Activated naive CD4-positive, alpha-beta T cell treated with anti-CD3 and anti-CD28 coated beads for 36 hours (primary cell): ENCODE measurements at regions of chr1 and their contacts with region 1.

Region 1: GRCh38 chr1:185813401-185813979 is 79.3 kb downstream of the HMCN1 start:
- DNase-seq: peak; percentile 19
- H3K4me3 Mint-ChIP-seq: no peak overlapping the region
- H3K27ac Mint-ChIP-seq: no peak overlapping the region
- H3K4me1 Mint-ChIP-seq: no peaks in the 10 kb centered on the region
- H3K27me3 Mint-ChIP-seq: no peaks in the 10 kb centered on the region

Region 2: DNA sequence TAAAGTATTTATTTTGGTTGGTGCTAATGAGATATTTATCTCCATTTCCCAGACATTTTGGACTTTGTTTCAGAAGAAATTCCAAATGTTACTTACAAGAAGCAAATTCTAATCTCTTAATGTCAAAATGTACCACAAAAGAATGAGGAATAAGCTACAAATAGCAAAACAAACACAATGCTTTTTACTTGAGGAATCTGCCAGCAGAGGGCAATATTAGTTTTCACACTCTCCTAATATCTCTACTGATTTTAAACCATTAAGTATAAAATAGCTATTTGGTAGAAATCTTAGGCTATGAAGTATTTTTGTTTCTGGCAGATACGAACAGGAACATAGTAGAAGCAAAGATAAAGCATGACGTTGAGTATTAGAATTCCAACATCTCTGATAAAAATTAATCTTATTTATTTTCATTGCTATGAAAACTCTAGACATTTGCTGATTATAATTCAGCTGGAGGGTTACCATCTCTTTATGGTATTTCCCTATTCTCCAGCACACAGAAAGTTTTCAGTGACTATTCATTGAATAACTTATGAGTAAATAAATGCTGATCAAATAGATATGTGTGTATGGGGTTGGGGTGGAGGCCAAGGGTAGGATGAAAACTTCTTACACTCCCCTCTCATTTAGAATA is 92.7 kb before region 1 on chr1:
- CTCF ChIA-PET with region 1: no interaction called
- intact Hi-C with region 1: loop called (anchors 5 kb)
- DNase-seq: no peak
- H3K4me3 Mint-ChIP-seq: no peak overlapping the region
- H3K27ac Mint-ChIP-seq: no peak overlapping the region
- H3K4me1 Mint-ChIP-seq: no peaks in the 10 kb centered on the region
- H3K27me3 Mint-ChIP-seq: peaks cover 8% of the 10 kb centered on the region

Region 3: DNA sequence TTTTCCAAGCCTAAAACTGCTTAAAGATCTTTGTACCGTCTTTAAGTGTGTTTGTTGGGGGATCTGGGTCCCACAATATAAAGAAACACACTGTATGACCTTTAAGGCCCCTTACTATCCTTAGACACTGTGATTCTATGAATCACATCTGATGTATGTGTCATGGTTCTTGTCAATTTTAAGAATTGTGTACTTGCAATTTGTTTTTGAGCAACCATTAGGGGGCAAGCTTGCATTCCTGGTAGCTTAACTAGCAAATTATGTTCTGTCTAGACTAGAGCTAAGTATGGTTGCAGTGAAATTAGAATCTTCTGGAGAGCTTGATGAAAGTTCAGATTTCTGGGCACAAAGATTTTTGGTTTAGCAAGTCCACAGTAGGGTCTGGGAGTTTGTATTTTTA is 342.1 kb after region 1 on chr1:
- CTCF ChIA-PET with region 1: no interaction called
- intact Hi-C with region 1: loop called (anchors 1 kb)
- DNase-seq: peak; percentile 28
- H3K4me3 Mint-ChIP-seq: no peak overlapping the region
- H3K27ac Mint-ChIP-seq: no peak overlapping the region
- H3K4me1 Mint-ChIP-seq: no peaks in the 10 kb centered on the region
- H3K27me3 Mint-ChIP-seq: peaks cover 3% of the 10 kb centered on the region

Region 4: GRCh38 chr1:186212544-186213226 is 399.2 kb after region 1 on chr1:
- CTCF ChIA-PET with region 1: interaction called, 4 read pairs
- intact Hi-C with region 1: loop called (anchors 1 kb)
- DNase-seq: peak; percentile 45
- H3K4me3 Mint-ChIP-seq: no peak overlapping the region
- H3K27ac Mint-ChIP-seq: no peak overlapping the region
- H3K4me1 Mint-ChIP-seq: no peaks in the 10 kb centered on the region
- H3K27me3 Mint-ChIP-seq: peaks cover 38% of the 10 kb centered on the region

Region 5: GRCh38 chr1:186295980-186296379 is 482.5 kb after region 1 on chr1:
- CTCF ChIA-PET with region 1: no interaction called
- intact Hi-C with region 1: loop called (anchors 1 kb)
- DNase-seq: no peak
- H3K4me3 Mint-ChIP-seq: peak within 1 kb of the TSS; percentile 42
- H3K27ac Mint-ChIP-seq: peak within 1 kb of the TSS; percentile 99
- H3K4me1 Mint-ChIP-seq: peaks cover 69% of the 10 kb centered on the region
- H3K27me3 Mint-ChIP-seq: no peaks in the 10 kb centered on the region

Region 6: GRCh38 chr1:186325239-186325638 is 511.7 kb after region 1 on chr1:
- CTCF ChIA-PET with region 1: no interaction called
- intact Hi-C with region 1: loop called (anchors 2 kb)
- DNase-seq: no peak
- H3K4me3 Mint-ChIP-seq: no peak overlapping the region
- H3K27ac Mint-ChIP-seq: no peak overlapping the region
- H3K4me1 Mint-ChIP-seq: peaks cover 39% of the 10 kb centered on the region
- H3K27me3 Mint-ChIP-seq: no peaks in the 10 kb centered on the region